ENCODE measurements at regions of chr1 and their contacts with region 1.

Region 1: DNA sequence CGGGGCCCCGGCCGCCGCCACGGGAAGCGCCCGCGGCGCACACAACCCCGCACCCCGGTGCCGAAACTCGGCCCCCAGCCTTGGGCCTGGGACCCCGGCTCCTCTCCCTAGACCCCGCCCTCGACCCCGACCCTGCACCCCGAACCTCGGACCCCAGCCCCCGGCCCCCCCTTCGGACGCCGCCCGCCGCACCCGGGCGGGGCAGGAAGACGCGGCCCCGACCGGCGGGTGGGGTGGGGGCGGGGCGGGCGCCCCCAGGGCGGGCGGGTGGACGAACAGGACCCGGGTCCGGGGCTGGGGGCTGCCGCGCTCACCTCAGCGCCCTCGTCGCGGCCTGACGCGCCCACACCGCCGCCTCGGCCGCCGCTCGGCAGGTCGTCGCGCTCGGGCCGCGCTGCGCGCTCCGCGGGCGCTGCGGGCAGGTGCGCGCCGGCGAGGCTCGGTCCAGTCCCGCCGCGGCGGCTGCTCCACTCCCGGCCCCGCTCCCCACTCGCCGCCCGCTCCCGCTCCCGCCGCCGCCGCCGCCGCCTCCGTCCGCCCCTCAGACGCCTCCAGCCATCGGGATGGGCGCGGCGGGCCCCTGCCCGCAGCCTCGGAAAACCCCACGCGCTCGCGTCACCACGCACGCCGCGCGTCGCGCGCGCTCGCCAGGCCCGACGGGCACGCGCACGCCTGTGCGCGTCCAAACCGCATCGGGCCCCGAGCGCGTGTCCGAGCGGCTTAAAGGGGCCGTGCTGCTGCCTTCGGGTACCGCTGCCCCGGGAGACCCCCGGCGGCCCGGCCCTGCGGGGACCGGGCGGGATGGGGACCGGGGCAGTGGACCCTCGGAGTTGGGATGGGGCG is at the start of gene GNB1:
- DNase-seq: peak; percentile 92
- H3K4me3 ChIP-seq: peak within 1 kb of the TSS; percentile 83 to 97 (median 95)
- H3K27ac ChIP-seq: peak within 1 kb of the TSS; percentile 90 to 100 (median 96)
- H3K4me1 ChIP-seq: peaks cover 0 to 63% (median 59%) of the 10 kb centered on the region in 4 donors
- H3K27me3 ChIP-seq: peaks cover 0 to 15% (median 13%) of the 10 kb centered on the region in 3 donors
- CTCF ChIP-seq: no peak
- EP300 ChIP-seq: no peak
- POLR2A ChIP-seq: no peak
- total RNA-seq, gene GNB1: 119 to 157 (median 145) TPM

Region 2: GRCh38 chr1:1619917-1620785 is 270.6 kb before region 1 on chr1:
- intact Hi-C with region 1: no loop called
- DNase-seq: no peak
- H3K4me3 ChIP-seq: no peak overlapping the region
- H3K27ac ChIP-seq: no peak overlapping the region
- H3K4me1 ChIP-seq: peaks cover 0 to 21% (median 14%) of the 10 kb centered on the region in 4 donors
- H3K27me3 ChIP-seq: no peaks in the 10 kb centered on the region
- CTCF ChIP-seq: no peak
- EP300 ChIP-seq: no peak
- POLR2A ChIP-seq: no peak

Region 3: DNA sequence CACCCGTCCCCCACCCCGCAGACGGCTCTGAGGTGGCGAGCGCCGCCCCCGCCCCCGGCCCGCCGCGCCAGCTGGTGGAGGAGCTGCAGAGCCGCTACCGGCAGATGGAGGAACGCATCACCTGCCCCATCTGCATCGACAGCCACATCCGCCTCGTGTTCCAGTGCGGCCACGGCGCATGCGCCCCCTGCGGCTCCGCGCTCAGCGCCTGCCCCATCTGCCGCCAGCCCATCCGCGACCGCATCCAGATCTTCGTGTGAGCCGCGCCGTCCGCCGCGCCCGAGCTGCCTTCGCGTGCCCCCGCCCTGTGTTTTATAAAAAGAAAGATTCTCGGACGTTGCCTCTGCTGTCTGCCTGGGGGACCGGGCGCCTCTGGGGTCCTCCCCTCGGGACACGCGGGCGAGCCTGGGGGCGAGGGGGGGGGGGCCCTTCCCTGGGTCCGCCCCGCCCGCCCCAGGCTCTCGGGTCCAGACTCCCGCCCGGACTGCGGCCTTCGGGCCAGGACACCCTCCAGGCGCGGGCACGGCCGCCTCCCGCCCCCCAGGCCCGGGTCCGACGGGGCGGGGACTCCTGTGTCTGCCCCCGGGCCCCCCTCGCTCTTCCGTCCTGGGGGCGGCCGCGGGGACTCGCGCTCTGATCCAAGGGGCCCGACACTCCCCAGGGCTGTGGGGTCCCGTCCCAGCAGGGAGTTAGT is 260.3 kb before region 1 on chr1:
- intact Hi-C with region 1: no loop called
- DNase-seq: peak; percentile 89
- H3K4me3 ChIP-seq: peak overlapping the region in 3 of 4 donors; percentile 28 to 46 (median 36)
- H3K27ac ChIP-seq: peak overlapping the region; percentile 70 to 85 (median 74)
- H3K4me1 ChIP-seq: peaks cover 0 to 25% (median 20%) of the 10 kb centered on the region in 4 donors
- H3K27me3 ChIP-seq: peaks cover 17 to 40% (median 36%) of the 10 kb centered on the region in 3 donors
- CTCF ChIP-seq: no peak
- EP300 ChIP-seq: no peak
- POLR2A ChIP-seq: no peak

Region 4: DNA sequence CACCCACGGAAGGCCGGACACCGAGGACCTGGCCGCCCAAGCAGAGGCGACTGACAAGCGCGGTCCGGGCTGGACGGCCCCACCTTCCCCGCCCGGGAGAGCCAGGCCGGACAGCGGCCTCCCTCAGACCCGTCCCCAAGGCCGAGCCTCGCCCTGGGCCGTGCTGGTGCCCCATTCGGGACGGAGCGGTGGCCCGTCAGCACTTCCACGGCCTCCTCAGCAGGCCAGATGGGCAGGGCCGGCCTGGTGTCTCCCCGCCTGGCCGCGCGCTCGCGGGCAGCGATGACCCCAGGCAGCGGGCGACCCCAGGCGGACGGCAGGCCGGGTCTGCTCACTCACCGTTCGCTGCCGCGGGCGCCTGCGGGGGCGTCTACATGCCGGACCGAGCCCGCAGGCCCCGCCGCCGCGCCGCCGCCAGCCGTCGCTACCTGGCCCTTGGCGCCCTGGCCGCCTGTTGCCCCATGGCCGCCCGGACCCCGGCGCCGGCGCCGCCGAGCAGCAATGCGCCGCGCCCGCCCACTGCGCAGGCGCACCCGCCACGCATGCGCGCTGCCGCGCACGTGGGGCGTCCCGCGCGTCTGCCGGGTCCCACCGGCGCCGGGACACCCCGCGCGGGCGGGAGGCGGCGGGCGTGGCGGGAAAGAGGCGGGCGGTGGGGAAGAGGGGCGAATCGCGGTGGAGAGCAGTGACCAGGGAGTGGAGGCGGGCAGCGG is 112.6 kb before region 1 on chr1 and contains the start of gene NADK:
- intact Hi-C with region 1: loop called (anchors 2 kb)
- DNase-seq: peak; percentile 78
- H3K4me3 ChIP-seq: peak within 1 kb of the TSS; percentile 79 to 98 (median 88)
- H3K27ac ChIP-seq: peak within 1 kb of the TSS; percentile 90 to 91 (median 91)
- H3K4me1 ChIP-seq: peaks cover 0 to 73% (median 67%) of the 10 kb centered on the region in 4 donors
- H3K27me3 ChIP-seq: no peaks in the 10 kb centered on the region
- CTCF ChIP-seq: no peak
- EP300 ChIP-seq: no peak
- POLR2A ChIP-seq: no peak
- total RNA-seq, gene NADK: 34.9 to 66.7 (median 42.4) TPM

Region 5: DNA sequence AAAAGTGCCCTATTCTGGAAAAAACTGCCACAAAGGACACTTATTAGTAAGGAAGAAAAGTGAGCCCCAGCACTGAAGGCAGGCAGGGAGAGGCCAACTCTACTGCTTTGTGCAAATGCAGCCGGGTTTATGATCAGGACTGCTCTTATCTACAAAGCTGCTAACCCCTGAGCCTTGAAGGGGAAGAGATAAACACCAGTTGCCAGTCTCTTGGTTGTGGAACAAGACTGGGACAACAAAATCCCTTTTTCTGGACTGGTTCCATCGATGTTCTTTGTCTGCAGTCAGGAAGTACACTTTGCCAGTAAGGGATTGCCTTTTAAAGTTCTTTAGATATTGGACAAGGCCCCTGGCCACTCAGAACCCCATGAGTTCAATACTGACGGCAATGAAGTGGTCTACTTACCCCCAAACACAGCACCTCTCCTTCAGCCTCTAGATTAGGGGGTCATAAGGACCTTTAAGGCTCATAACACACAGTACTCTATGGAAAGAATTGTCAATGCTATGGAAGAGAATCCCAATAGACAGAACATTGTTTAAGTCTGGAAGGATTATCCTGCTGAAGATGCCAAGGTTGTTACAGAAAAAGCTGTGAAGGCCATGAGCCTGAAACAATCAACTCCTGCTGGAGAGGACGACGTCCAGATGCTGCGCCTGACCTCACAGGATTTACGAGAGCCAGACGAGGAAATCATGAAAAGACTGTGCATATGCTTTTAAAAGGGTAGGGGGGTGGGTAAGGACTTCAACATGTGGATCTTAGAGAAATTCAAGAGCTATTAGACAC is 43.5 kb before region 1 on chr1:
- intact Hi-C with region 1: loop called (anchors 2 kb)
- DNase-seq: no peak
- H3K4me3 ChIP-seq: no peak overlapping the region
- H3K27ac ChIP-seq: peak overlapping the region; percentile 10 to 75 (median 68)
- H3K4me1 ChIP-seq: peaks cover 0 to 60% (median 49%) of the 10 kb centered on the region in 4 donors
- H3K27me3 ChIP-seq: no peaks in the 10 kb centered on the region
- CTCF ChIP-seq: no peak
- EP300 ChIP-seq: no peak
- POLR2A ChIP-seq: no peak

Region 6: GRCh38 chr1:2194898-2195673 is 304.4 kb after region 1 on chr1:
- intact Hi-C with region 1: no loop called
- DNase-seq: peak; percentile 97
- H3K4me3 ChIP-seq: peak overlapping the region; percentile 54 to 74 (median 69)
- H3K27ac ChIP-seq: peak overlapping the region; percentile 94 to 99 (median 96)
- H3K4me1 ChIP-seq: peaks cover 0 to 70% (median 66%) of the 10 kb centered on the region in 4 donors
- H3K27me3 ChIP-seq: no peaks in the 10 kb centered on the region
- CTCF ChIP-seq: peak; percentile 88 to 99 (median 96)
- EP300 ChIP-seq: peak in 1 of 4 donors; percentile 15
- POLR2A ChIP-seq: peak in 1 of 2 donors; percentile 41